K562 (cell line): ENCODE measurements at regions of chr1 and their contacts with region 1.

Region 1: DNA sequence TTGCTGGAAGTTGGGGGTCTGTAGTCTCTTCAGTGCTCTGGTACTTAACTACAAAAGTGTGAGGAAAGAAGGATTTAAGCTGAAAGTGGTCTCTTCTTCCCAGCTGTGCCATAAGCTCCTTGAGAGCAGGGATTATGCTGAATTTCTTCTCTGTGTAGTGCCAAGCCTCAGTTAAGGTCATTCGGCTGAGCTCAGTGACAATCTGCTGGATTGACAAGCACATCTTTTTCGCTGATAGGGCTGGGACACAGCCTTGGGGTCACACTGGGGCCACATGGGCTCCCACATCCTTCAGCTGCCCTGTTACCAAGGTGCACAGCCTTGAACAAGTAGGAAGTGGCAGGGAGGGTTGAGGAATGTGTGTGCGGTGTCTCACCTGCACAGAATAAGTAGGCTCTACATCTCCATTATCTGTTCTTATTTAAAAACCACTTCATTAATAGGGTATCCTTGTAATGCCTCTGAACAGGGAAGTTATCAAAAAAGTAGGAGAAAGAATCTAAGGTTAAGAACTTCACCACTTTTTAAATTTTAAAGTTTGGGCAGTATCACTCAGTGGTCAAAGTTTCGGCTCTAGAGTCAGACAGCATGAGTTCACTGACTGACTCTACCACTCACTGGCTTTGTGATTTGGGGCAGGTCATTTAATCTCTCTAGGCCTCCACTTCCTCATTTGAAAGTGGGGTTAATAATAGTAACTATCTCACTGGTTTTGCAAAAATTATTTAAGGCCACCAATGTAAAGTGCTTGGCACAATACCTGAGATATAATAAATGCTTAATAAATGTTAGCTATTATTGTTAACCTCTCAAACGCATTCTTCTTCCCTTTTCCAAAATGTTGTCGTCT is 10.3 kb downstream of the ZBTB40 start:
- DNase-seq: no peak
- ATAC-seq: peak; percentile 61
- H3K4me3 ChIP-seq: no peak overlapping the region
- H3K27ac ChIP-seq: no peak overlapping the region
- H3K4me1 ChIP-seq: peaks cover 8 to 9% of the 10 kb centered on the region in 2 experiments; a peak in 4 of 5 replicates
- H3K27me3 ChIP-seq: no peaks in the 10 kb centered on the region
- CTCF ChIP-seq: no peak
- EP300 ChIP-seq: no peak
- POLR2A ChIP-seq: no peak
- RAD21 ChIP-seq: no peak

Region 2: GRCh38 chr1:22289307-22289995 is 172.5 kb before region 1 on chr1:
- CTCF ChIA-PET with region 1: no interaction called
- POLR2A ChIA-PET with region 1: no interaction called
- in situ Hi-C with region 1: no loop called
- intact Hi-C with region 1: no loop called
- DNase-seq: no peak
- ATAC-seq: no peak
- H3K4me3 ChIP-seq: no peak overlapping the region
- H3K27ac ChIP-seq: no peak overlapping the region
- H3K4me1 ChIP-seq: peaks cover 20 to 24% of the 10 kb centered on the region in 2 experiments
- H3K27me3 ChIP-seq: no peaks in the 10 kb centered on the region; a peak in 1 of 5 replicates
- CTCF ChIP-seq: no peak
- EP300 ChIP-seq: no peak
- POLR2A ChIP-seq: no peak
- RAD21 ChIP-seq: no peak

Region 3: DNA sequence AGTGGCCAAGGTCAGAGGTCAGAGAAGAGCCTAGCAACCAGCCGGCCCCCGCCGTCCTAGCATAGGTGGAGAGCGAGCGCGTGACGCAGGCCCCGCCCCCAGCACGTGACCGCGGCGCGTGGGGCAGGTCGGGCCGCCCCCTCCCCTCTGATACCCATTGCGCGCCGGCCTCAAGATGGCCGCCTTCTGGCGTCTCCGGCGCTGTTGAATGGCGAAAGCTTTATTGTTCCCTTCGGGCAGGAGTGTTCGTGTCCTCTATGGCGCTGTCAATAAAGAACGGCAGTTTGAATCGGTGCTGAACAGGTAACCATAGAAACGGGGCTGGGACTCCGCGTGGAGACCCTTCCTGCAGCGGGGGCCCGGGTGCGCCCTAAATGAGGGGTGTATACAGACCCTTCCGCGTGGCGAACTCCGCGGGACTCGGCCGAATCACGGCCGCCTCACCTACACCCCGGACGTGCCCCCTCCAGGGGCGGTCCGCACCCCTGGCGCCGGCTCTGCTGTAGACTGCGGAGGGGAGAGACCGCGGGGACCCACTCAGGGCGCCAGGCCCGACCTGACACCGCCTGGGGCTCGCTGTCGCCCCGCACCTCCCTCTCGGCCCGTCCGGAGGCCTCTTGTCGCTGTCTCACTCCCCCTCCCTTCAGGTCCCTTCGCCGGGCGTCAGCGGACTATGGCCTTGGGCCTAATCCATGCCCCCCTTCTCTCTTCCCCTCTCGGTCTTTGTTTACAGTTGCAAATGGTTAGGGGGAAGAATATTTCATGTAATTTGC is 10.0 kb before region 1 on chr1 and contains the start of gene ZBTB40:
- CTCF ChIA-PET with region 1: no interaction called
- POLR2A ChIA-PET with region 1: interaction called, 11 read pairs
- in situ Hi-C with region 1: no loop called
- intact Hi-C with region 1: no loop called
- DNase-seq: peak; percentile 98 to 99 (median 99)
- ATAC-seq: peak; percentile 96
- H3K4me3 ChIP-seq: peak within 1 kb of the TSS; percentile 96
- H3K27ac ChIP-seq: peak within 1 kb of the TSS; percentile 82
- H3K4me1 ChIP-seq: peaks cover 19 to 42% of the 10 kb centered on the region in 2 experiments
- H3K27me3 ChIP-seq: no peaks in the 10 kb centered on the region
- CTCF ChIP-seq: no peak; a peak in 1 of 6 replicates
- EP300 ChIP-seq: peak; percentile 75
- POLR2A ChIP-seq: peak; percentile 65
- RAD21 ChIP-seq: no peak
- polyA plus RNA-seq, gene ZBTB40: 2.6 to 5.1 TPM

Region 4: DNA sequence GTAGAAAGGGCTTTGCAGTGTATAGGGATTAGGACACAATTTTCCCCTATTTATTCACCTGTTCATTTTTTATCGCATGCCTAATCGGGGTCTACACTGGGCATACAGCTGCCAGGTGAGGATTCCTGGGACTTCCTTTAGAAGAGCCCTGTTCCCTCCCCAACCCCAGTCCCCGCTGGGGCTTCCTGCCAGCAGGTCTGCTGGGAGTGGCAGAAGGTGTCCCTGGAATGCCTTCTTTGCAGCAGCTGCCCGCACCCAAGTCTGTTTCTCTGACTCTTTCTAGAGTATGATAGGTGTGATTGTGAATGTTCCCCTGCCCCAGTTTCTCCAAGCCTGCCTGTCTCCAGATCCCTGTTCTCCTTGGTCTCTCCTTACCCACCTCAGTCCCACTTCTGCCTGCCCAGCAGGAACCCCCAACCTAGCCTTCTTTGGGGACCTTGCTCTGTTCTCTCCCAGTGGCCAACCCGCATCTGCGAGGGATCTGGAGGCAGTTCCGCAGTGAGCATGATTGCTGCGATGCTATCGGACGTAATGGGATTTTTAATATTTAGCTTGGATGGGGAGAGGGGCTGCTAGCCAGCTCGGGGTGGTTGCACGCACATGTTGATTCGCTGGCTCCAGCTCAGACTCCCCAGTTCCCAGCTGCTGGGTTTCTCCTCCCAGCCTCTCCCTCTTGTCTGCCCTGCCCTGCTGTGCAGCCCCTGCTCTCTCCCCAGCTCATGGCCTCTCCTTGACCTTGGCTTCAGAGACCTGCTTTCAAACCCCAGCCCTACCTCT is 328.5 kb after region 1 on chr1:
- CTCF ChIA-PET with region 1: no interaction called
- POLR2A ChIA-PET with region 1: no interaction called
- in situ Hi-C with region 1: no loop called
- intact Hi-C with region 1: no loop called
- DNase-seq: no peak
- ATAC-seq: no peak
- H3K4me3 ChIP-seq: no peak overlapping the region
- H3K27ac ChIP-seq: no peak overlapping the region
- H3K4me1 ChIP-seq: no peaks in the 10 kb centered on the region
- H3K27me3 ChIP-seq: peaks cover 12 to 28% of the 10 kb centered on the region in 2 experiments; a peak in 4 of 5 replicates
- CTCF ChIP-seq: no peak
- EP300 ChIP-seq: no peak
- POLR2A ChIP-seq: no peak
- RAD21 ChIP-seq: no peak